MCF 10A (cell line): ENCODE measurements at regions of chr15 and their contacts with region 1.

Region 1: DNA sequence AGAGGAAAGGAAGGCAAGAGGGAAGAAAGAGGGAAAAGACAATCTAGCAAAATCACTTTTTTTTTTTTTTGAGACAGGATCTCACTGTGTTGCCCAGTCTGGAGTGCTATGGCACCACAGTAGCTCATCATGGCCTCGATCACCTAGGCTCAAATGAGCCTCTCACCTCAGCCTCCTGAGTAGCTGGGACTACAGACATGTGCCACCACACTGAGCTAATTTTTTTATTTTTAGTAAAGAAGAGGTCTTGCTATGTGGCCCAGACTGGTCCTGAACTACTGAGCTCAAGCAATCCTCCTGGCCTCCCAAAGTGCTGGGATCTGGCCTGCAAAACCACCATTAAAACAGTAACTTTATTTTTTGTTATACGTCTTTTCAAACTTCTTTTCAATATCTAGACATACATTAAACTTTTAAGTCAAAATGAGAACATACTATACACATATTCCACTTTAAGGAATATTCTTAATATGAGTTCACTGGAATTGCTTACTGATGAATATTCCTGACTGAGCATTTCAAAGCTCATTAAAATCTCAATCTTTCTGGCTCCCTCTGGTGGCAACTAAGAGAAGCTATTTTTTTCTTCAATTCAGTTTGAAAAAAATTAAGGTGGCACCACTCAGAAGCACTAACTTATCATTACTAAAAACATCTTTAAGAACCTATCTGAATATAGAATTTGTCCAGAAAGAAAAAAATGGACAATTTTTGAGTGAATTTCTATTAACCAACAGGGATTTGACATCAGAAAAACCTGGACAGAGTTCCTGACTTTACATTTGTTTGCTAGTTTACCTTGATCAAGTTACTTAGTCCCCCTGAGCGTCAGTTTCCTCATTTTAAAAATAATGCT is 40.9 kb downstream of the UACA start:
- DNase-seq: peak; percentile 45
- H3K4me3 Mint-ChIP-seq: no peak overlapping the region
- H3K27ac Mint-ChIP-seq: no peak overlapping the region
- H3K4me1 Mint-ChIP-seq: peaks cover 5% of the 10 kb centered on the region
- H3K27me3 Mint-ChIP-seq: no peaks in the 10 kb centered on the region
- CTCF ChIP-seq: peak; percentile 62

Region 2: DNA sequence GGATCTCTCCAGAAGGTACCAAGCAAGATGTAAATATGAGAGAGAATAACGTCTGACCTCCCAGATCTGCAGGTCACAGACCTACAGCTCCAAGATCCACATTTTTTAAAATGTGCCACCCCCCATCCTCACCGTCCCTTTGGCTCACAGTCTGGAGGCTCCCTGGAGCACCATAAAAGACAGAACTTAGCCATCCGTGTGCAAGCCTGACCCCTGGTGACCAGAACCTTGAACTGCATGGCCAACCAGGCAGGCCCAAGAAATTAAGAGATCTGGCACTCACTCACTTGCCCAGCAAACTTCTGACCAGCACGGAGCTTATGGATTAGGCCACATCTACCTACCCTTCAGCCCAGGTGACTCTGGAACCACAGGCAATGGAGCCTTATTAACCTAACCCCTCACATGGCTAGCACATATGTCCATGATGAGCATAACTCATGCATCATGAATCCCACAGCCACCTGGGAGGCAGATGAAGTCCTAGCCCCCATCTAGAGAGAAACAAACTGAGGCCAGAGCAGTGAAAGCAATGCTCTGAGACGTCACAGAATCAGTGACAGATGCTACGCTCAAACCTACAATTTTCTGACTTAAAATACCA is 234.4 kb before region 1 on chr15:
- CTCF ChIA-PET with region 1: no interaction called
- POLR2A ChIA-PET with region 1: no interaction called
- intact Hi-C with region 1: no loop called
- DNase-seq: peak; percentile 77
- H3K4me3 Mint-ChIP-seq: no peak overlapping the region
- H3K27ac Mint-ChIP-seq: no peak overlapping the region
- H3K4me1 Mint-ChIP-seq: peaks cover 26% of the 10 kb centered on the region
- H3K27me3 Mint-ChIP-seq: peaks cover 3% of the 10 kb centered on the region
- CTCF ChIP-seq: peak; percentile 94

Region 3: DNA sequence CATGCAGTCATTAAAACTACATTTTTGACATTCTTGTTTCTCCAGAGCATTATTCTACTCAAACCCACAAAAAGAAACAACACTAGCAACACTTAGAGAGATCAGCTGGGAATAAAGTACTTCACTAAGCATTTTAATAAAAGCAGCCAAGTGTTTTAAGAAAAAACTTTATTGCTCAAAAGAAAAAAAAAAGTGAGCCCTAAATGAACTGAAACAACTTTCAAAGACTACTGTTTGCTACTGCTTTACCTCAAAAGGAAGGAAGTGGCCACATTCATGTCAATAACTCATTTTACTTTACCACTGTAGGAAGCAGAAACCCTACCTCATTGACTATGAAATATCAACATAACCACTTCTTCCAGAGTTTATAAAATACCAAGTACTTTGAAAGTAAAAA is 50.4 kb before region 1 on chr15:
- CTCF ChIA-PET with region 1: interaction called, 16 read pairs
- POLR2A ChIA-PET with region 1: no interaction called
- intact Hi-C with region 1: no loop called
- DNase-seq: no peak
- H3K4me3 Mint-ChIP-seq: no peak overlapping the region
- H3K27ac Mint-ChIP-seq: no peak overlapping the region
- H3K4me1 Mint-ChIP-seq: no peaks in the 10 kb centered on the region
- H3K27me3 Mint-ChIP-seq: no peaks in the 10 kb centered on the region
- CTCF ChIP-seq: no peak

Region 4: GRCh38 chr15:70679919-70680231 is 42.6 kb before region 1 on chr15:
- CTCF ChIA-PET with region 1: interaction called, 59 read pairs
- POLR2A ChIA-PET with region 1: interaction called, 8 read pairs
- intact Hi-C with region 1: loop called (anchors 1 kb)
- DNase-seq: no peak
- H3K4me3 Mint-ChIP-seq: no peak overlapping the region
- H3K27ac Mint-ChIP-seq: peak overlapping the region; percentile 58
- H3K4me1 Mint-ChIP-seq: no peaks in the 10 kb centered on the region
- H3K27me3 Mint-ChIP-seq: no peaks in the 10 kb centered on the region
- CTCF ChIP-seq: no peak